Ascending aorta (tissue), 2 donors: ENCODE measurements at regions of chr15 and their contacts with region 1.

Region 1: GRCh38 chr15:24856397-24857390 is 98.1 kb upstream of the SNRPN start:
- DNase-seq: peak in 1 of 2 donors; percentile 79
- H3K4me3 ChIP-seq: peak overlapping the region in 1 of 2 donors; percentile 52
- H3K27ac ChIP-seq: peak overlapping the region in 1 of 2 donors; percentile 46
- H3K4me1 ChIP-seq: no peaks in the 10 kb centered on the region
- H3K27me3 ChIP-seq: no peaks in the 10 kb centered on the region
- CTCF ChIP-seq: no peak

Region 2: DNA sequence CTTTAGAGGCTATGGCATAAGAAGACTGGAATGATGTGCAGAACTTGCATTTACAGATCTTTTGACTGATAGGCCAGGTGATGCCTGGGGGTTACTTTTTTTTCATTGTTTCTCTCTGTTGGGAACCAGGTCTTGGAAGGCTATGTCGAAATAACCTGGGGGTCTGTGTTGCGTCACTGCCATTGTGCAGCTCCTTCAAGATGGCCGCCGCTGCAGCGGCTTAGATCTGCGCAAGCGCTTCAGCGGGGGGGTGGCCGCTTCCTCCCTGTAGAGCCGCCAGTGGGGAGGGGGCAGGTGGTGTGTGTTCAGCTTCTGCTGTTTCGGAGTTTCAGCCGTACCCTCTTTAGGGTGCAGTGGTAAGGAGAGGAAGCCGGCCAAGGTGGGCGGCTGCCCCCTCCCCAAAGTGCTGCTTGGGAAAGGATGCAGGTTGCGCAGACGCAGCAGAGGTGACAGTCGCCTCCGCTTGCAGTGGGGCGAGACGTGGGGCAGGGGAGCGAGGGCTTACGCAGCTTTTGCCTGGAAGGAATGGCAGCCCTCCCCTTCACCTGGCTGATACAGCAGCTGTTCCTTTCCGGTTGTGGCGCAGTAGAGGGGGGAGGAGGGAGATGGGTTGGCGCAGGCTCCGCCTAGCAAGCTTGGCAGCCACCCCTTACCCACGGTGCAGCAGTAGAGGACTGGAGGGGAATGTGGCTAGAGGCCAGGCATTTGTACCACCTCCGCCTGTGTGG is 99.6 kb after region 1 on chr15:
- intact Hi-C with region 1: loop called (anchors 5 kb)
- DNase-seq: peak; percentile 21 to 91
- H3K4me3 ChIP-seq: peak overlapping the region; percentile 68 to 74
- H3K27ac ChIP-seq: peak overlapping the region; percentile 94 to 95
- H3K4me1 ChIP-seq: peaks cover 0 to 5% of the 10 kb centered on the region in 2 donors
- H3K27me3 ChIP-seq: no peaks in the 10 kb centered on the region
- CTCF ChIP-seq: no peak

Region 3: GRCh38 chr15:25087137-25087536 is 230.4 kb after region 1 on chr15:
- intact Hi-C with region 1: no loop called
- DNase-seq: no peak
- H3K4me3 ChIP-seq: no peak overlapping the region
- H3K27ac ChIP-seq: no peak overlapping the region
- H3K4me1 ChIP-seq: no peaks in the 10 kb centered on the region
- H3K27me3 ChIP-seq: no peaks in the 10 kb centered on the region
- CTCF ChIP-seq: no peak